ENCODE measurements at regions of chr3 and their contacts with region 1.

Region 1: DNA sequence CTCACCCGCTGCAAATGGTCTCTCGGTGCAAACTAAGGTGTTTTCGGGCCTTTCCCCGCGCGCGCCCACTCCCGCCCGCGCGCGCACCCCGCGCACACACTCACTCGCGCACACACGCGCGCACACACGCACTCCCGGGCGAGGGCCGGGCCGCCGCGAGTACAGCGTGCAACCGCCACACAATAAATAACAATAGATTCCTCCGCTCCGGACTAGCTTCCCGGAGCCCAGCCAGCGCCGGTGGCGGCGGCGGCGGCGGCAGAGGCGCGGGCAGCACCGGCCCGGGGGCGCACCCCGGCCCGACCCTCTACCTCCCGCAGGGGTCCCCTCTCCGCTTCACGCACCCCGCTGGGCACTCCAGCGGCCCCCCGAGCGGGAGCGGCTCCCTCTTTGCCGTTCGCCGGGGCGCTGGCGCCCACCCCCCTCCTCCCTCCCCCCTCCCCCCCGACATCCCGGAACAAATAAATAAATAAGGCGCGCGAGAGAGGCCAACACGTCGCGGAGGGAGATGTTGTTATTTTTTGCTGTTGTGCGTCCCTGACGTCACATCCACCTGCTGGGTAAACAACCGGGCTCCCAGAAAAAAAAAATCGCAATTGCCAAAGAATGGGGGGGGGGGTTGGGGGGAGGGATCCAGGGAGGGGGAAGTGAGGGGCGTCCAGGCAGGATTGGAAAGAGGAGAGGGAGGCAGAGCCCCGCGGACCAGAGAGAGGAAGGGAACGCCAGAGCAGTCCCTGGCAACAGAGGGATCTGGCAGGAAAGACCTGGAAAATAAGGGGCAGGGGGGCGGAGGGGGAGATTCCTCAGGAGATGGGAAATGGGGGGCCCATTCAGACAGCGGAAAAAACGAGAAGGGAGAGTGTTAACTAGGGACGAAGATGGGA is at the start of gene FOXP1:
- DNase-seq: peak in 1 of 2 donors; percentile 89
- H3K4me3 ChIP-seq: peak within 1 kb of the TSS; percentile 85 to 93
- H3K27ac ChIP-seq: peak within 1 kb of the TSS; percentile 96 to 100
- H3K4me1 ChIP-seq: peaks cover 0 to 12% of the 10 kb centered on the region in 2 donors
- H3K27me3 ChIP-seq: no peaks in the 10 kb centered on the region
- CTCF ChIP-seq: no peak
- total RNA-seq, gene FOXP1: 171 TPM

Region 2: GRCh38 chr3:70716832-70717231 is 867.0 kb before region 1 on chr3:
- intact Hi-C with region 1: loop called (anchors 2 kb)
- DNase-seq: no peak
- H3K4me3 ChIP-seq: no peak overlapping the region
- H3K27ac ChIP-seq: no peak overlapping the region
- H3K4me1 ChIP-seq: peaks cover 3 to 7% of the 10 kb centered on the region in 2 donors
- H3K27me3 ChIP-seq: no peaks in the 10 kb centered on the region
- CTCF ChIP-seq: peak; percentile 30 to 65 (median 52)

Region 3: GRCh38 chr3:71130471-71131374 is 453.1 kb before region 1 on chr3:
- intact Hi-C with region 1: loop called (anchors 2 kb)
- DNase-seq: peak in 1 of 2 donors; percentile 85
- H3K4me3 ChIP-seq: peak overlapping the region; percentile 49 to 73
- H3K27ac ChIP-seq: peak overlapping the region; percentile 85 to 90
- H3K4me1 ChIP-seq: peaks cover 2 to 36% of the 10 kb centered on the region in 2 donors
- H3K27me3 ChIP-seq: no peaks in the 10 kb centered on the region
- CTCF ChIP-seq: no peak

Region 4: DNA sequence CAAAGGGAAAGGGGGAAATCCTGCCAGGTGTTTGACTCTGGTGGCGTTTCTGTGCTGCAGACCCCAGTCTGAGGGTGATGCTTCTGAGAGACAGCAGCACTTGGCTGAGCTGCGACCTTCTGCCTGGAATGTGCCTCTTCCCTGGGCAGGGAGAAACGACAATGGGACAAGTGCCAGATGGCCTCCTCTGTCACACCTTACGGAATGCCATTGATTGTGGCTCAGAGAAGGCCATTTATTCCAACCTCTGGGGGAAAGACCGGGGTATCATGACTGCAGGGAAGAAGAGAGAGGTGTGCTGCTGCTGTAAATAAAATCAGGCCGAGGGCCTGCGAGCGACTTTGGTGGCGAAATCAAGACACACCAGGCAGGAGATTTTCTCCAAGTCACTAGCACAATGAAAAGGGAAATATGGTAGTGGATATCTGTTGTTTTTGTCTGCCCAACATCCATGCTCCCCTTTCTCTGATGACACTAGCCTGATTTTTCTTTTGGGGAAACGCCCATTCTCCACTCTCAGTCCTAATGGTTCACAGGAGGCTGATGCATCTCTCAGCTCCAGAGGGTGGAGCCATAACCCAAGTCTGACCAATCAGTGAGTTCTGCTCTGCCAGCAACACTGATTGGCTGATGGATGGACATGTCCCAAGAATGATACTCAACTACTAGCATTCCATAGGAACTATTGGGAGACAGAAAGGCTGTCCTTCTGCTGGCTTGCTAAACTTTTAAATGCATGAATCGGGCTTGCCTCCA is 336.4 kb before region 1 on chr3:
- intact Hi-C with region 1: loop called (anchors 5 kb)
- DNase-seq: peak in 1 of 2 donors; percentile 58
- H3K4me3 ChIP-seq: no peak overlapping the region
- H3K27ac ChIP-seq: peak overlapping the region; percentile 69 to 86
- H3K4me1 ChIP-seq: peaks cover 0 to 21% of the 10 kb centered on the region in 2 donors
- H3K27me3 ChIP-seq: no peaks in the 10 kb centered on the region
- CTCF ChIP-seq: no peak

Region 5: DNA sequence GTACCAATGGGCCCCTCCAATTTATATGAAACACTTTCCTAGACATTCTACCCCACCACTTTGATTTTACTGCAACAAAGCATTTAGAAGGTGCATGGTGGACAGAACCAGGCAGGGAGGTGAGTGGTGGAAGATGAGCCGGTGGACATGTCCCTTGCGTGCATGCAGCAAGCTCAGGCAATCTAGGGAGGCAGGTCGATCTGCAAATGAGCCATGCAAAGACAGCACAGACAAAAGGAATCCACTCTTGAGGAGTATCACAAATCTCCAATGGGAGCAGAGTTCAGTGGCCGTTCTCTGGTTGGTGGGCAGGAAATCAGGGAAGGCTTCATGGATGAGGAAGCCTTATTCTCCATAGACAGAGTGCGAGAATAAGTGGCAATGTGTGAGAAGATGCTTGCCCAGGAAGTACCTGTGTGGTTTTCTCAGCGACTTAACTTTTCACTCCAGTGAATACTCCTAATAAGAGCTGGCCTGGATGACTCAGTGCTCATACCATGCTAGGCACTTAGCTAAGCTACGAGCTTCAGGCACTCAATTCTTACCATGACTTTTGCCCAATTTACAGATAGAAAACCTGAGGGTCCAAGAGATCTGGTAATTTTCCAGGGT is 152.8 kb before region 1 on chr3:
- intact Hi-C with region 1: loop called (anchors 5 kb)
- DNase-seq: no peak
- H3K4me3 ChIP-seq: no peak overlapping the region
- H3K27ac ChIP-seq: peak overlapping the region; percentile 28 to 59
- H3K4me1 ChIP-seq: peaks cover 9 to 26% of the 10 kb centered on the region in 2 donors
- H3K27me3 ChIP-seq: no peaks in the 10 kb centered on the region
- CTCF ChIP-seq: no peak

Region 6: GRCh38 chr3:71542521-71543370 is 41.1 kb before region 1 on chr3:
- intact Hi-C with region 1: loop called (anchors 2 kb)
- DNase-seq: peak; percentile 63 to 92
- H3K4me3 ChIP-seq: peak overlapping the region; percentile 20 to 56
- H3K27ac ChIP-seq: peak overlapping the region; percentile 75 to 80
- H3K4me1 ChIP-seq: peaks cover 0 to 30% of the 10 kb centered on the region in 2 donors
- H3K27me3 ChIP-seq: no peaks in the 10 kb centered on the region
- CTCF ChIP-seq: no peak

Region 7: GRCh38 chr3:71926262-71926600 is 342.4 kb after region 1 on chr3:
- intact Hi-C with region 1: no loop called
- DNase-seq: no peak
- H3K4me3 ChIP-seq: no peak overlapping the region
- H3K27ac ChIP-seq: no peak overlapping the region
- H3K4me1 ChIP-seq: no peaks in the 10 kb centered on the region
- H3K27me3 ChIP-seq: no peaks in the 10 kb centered on the region
- CTCF ChIP-seq: peak in 1 of 3 experiments; percentile 18

Measured in ascending aorta (tissue), 2 donors.